ENCODE measurements at regions of chr17 and their contacts with region 1.

Region 1: DNA sequence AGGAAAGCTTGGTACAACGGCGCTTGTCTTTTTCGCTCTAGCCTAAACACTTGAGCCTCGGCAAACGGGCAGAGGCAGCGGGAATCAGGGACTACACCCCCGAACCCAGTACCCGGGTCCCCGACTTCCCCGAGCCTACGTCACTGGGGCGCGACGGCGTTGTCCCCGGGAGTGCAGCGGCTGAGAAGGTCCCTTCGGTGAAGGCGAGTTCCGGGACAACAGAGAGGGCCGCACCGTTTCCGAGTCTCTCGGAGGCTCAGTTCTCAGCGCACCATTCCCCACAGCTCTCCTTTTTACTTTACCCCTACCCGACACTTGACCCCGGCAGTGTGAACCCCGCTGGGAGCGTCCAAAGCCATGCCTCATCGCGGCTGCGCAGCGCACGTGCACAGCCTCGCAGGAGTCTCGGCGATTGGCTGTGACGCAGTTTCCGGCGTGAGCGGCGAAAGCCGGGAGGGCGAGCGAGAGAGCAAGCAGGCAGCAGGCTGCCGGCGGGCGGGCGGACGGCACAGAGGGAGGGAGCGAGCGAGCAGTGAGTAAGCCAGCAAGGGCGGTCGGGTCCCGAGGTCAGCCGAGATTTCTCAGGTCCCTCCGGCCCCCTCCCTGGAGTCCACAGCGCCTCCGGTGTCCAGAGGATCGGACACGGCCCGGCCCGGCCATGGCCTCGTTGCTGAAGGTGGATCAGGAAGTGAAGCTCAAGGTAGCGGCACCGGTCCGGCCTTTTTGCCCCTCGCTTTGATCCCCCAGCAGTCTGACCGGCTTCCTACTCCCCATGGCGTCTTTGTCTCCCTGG is at the start of gene PSME3:
- DNase-seq: peak; percentile 84
- ATAC-seq: peak; percentile 91
- H3K4me3 Mint-ChIP-seq: peak within 1 kb of the TSS; percentile 97
- H3K27ac Mint-ChIP-seq: peak within 1 kb of the TSS; percentile 99
- H3K4me1 Mint-ChIP-seq: peaks cover 24% of the 10 kb centered on the region
- H3K27me3 Mint-ChIP-seq: no peaks in the 10 kb centered on the region
- CTCF ChIP-seq: no peak
- total RNA-seq, gene PSME3: 136 and 141 TPM in 2 replicates

Region 2: GRCh38 chr17:42773290-42774035 is 59.7 kb before region 1 on chr17 and contains the start of gene VPS25:
- CTCF ChIA-PET with region 1: no interaction called
- POLR2A ChIA-PET with region 1: interaction called, 17 read pairs
- intact Hi-C with region 1: no loop called
- DNase-seq: peak; percentile 71
- ATAC-seq: peak; percentile 92
- H3K4me3 Mint-ChIP-seq: peak within 1 kb of the TSS; percentile 98
- H3K27ac Mint-ChIP-seq: peak within 1 kb of the TSS; percentile 96
- H3K4me1 Mint-ChIP-seq: peaks cover 35% of the 10 kb centered on the region
- H3K27me3 Mint-ChIP-seq: no peaks in the 10 kb centered on the region
- CTCF ChIP-seq: no peak
- total RNA-seq, gene VPS25: 49.7 and 49.8 TPM in 2 replicates

Region 3: DNA sequence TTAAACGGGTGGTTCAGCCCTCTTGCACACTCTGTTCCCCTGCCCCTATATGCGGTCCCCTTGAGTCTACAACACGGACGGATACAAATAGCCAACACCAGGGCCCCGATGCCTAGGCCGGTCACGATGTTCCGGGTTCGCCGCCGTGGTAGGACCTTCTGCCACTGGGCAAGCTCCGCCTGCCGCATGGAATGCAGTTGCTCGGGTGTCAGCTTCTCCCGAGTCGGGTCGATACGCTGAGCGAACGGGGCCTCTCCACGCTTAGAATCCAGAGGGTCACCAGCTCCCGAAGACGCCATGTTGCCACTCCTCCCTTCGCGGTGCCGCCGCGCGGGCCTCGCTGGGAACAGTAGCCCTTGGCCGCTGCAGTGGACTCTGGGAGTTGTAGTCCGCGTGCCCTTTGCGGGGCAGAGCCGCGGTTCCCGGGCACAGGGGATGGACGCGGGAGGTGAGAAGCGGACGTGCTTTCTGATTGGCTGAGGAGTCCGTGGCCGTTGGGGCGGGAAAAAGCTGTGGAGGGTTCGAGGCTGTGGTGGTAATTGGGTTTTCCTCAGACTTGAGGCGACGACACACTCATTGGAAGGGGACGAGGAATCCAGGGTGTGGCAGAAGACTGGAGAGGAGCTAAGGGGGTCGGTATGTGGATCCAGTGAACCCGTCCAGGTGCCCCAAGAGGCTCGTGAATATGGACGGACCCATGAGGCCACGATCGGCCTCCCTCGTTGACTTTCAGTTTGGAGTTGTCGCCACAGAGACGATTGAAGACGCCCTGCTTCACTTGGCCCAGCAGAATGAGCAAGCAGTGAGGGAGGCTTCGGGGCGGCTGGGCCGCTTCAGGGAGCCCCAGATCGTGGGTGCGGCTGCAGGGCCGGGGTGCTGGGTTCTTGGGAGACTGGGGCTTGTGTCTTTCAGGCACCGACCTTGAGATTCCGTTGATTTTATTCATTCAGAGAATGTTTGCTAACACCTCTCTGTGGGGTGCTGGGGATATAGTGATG is 34.5 kb before region 1 on chr17 and contains the starts of genes CNTD1 and COA3:
- CTCF ChIA-PET with region 1: no interaction called
- POLR2A ChIA-PET with region 1: interaction called, 10 read pairs
- intact Hi-C with region 1: no loop called
- DNase-seq: peak; percentile 69
- ATAC-seq: peak; percentile 100
- H3K4me3 Mint-ChIP-seq: peak within 1 kb of the TSS; percentile 97
- H3K27ac Mint-ChIP-seq: peak within 1 kb of the TSS; percentile 81
- H3K4me1 Mint-ChIP-seq: peaks cover 28% of the 10 kb centered on the region
- H3K27me3 Mint-ChIP-seq: no peaks in the 10 kb centered on the region
- CTCF ChIP-seq: no peak
- total RNA-seq, gene CNTD1: not detected in 2 replicates
- total RNA-seq, gene COA3: 41.4 and 48.0 TPM in 2 replicates

Region 4: GRCh38 chr17:42980398-42981397 is 147.5 kb after region 1 on chr17 and contains the start of gene RUNDC1:
- CTCF ChIA-PET with region 1: no interaction called
- POLR2A ChIA-PET with region 1: interaction called, 6 read pairs
- intact Hi-C with region 1: loop called (anchors 5 kb)
- DNase-seq: peak; percentile 94
- ATAC-seq: peak; percentile 76
- H3K4me3 Mint-ChIP-seq: peak within 1 kb of the TSS; percentile 99
- H3K27ac Mint-ChIP-seq: peak within 1 kb of the TSS; percentile 98
- H3K4me1 Mint-ChIP-seq: peaks cover 53% of the 10 kb centered on the region
- H3K27me3 Mint-ChIP-seq: no peaks in the 10 kb centered on the region
- CTCF ChIP-seq: no peak
- total RNA-seq, gene RUNDC1: 28.3 and 30.9 TPM in 2 replicates

Region 5: GRCh38 chr17:43170766-43171585 is 337.8 kb after region 1 on chr17 and contains the start of gene NBR1:
- CTCF ChIA-PET with region 1: no interaction called
- POLR2A ChIA-PET with region 1: interaction called, 3 read pairs
- intact Hi-C with region 1: loop called (anchors 2 kb)
- DNase-seq: peak; percentile 86
- ATAC-seq: peak; percentile 74
- H3K4me3 Mint-ChIP-seq: no peak within 1 kb of the TSS
- H3K27ac Mint-ChIP-seq: no peak within 1 kb of the TSS
- H3K4me1 Mint-ChIP-seq: peaks cover 13% of the 10 kb centered on the region
- H3K27me3 Mint-ChIP-seq: no peaks in the 10 kb centered on the region
- CTCF ChIP-seq: no peak
- total RNA-seq, gene NBR1: 42.2 and 44.8 TPM in 2 replicates